Transverse colon (tissue), 4 donors: ENCODE measurements at regions of chr15 and their contacts with region 1.

Region 1: GRCh38 chr15:47756872-47757271 is 39.6 kb downstream of the SEMA6D start:
- DNase-seq: peak; percentile 51
- H3K4me3 ChIP-seq: no peak overlapping the region
- H3K27ac ChIP-seq: no peak overlapping the region
- H3K4me1 ChIP-seq: peaks cover 0 to 5% (median 0%) of the 10 kb centered on the region in 4 donors
- H3K27me3 ChIP-seq: no peaks in the 10 kb centered on the region
- CTCF ChIP-seq: no peak
- EP300 ChIP-seq: no peak
- POLR2A ChIP-seq: no peak

Region 2: DNA sequence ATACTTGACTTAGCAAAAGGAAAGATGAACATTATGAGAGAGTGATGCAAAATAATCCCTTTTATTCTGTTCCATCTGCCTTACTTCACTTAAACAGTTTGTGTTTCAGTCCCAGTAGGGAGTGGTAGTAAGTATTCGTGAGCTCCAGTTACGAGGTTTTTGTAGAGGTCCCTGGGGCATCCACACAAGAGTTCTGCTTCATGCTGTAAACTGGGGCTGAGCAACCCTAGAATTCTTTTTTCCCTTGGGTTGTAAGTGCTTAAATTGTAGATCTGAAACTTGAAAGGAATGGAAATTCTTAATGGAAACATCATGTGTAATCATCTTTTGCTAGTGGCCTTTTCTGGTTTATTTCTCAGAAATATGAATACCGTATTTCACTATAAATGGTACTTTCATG is 40.0 kb after region 1 on chr15:
- in situ Hi-C with region 1: no loop called
- intact Hi-C with region 1: loop called (anchors 1 kb)
- DNase-seq: no peak
- H3K4me3 ChIP-seq: no peak overlapping the region
- H3K27ac ChIP-seq: no peak overlapping the region
- H3K4me1 ChIP-seq: no peaks in the 10 kb centered on the region
- H3K27me3 ChIP-seq: no peaks in the 10 kb centered on the region
- CTCF ChIP-seq: no peak
- EP300 ChIP-seq: no peak
- POLR2A ChIP-seq: no peak